AG04449 (cell line): ENCODE measurements at regions of chr2 and their contacts with region 1.

Region 1: GRCh38 chr2:31401580-31401979 is 13.0 kb downstream of the XDH start:
- DNase-seq: peak; percentile 94
- H3K4me3 ChIP-seq: no peak overlapping the region
- CTCF ChIP-seq: no peak

Region 2: DNA sequence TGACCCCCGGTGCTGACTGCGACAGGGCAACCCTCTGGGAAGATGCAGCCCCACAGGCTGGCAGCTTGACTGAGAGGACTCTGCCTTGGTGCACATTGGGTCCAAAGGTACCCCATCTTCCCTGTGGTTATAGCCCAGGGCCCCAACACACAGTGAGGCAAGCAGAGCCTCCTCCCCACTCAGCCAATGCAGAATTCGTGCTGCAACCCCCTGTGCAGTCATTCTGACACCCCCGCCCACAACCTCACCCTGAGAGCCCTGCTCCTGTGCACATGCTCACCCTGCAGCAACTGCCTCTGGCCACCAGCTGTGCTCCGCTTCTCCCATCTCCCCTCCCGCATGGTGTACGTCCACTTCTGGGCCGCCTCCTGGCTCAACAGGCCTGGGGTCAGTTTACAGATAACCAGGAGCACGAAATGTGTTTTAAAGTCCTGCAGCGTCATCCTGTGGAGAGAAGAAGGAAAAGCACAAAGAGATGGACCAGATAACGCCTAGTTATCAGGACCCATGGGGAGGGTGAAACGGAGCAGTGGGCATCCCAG is 208.7 kb before region 1 on chr2:
- CTCF ChIA-PET with region 1: no interaction called
- POLR2A ChIA-PET with region 1: no interaction called
- DNase-seq: no peak
- H3K4me3 ChIP-seq: no peak overlapping the region
- CTCF ChIP-seq: no peak

Region 3: DNA sequence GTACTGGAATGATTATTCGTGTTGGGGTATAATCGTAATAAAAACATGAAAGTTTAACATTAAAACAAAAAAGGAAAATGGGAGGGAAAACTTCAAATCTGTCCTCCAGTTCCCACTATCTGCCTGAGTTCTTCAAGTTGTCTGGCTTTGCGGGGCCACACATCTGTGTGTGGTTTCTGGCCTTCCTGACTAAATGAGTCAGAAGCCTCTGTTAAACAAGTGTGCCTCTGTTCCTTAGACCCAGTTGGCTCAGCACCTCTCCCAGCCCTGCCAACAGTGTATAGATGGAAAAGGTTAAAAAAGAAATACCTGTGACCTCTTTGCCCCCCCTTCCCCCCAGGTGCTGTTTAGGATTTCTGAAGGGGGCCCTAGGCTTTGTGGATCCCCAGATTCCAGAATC is 17.2 kb before region 1 on chr2:
- CTCF ChIA-PET with region 1: interaction called, 8 read pairs
- POLR2A ChIA-PET with region 1: interaction called, 12 read pairs
- DNase-seq: peak; percentile 76
- H3K4me3 ChIP-seq: no peak overlapping the region
- CTCF ChIP-seq: no peak

Region 4: GRCh38 chr2:31413862-31414550 is 12.4 kb after region 1 on chr2:
- CTCF ChIA-PET with region 1: interaction called, 14 read pairs
- POLR2A ChIA-PET with region 1: no interaction called
- DNase-seq: no peak
- H3K4me3 ChIP-seq: no peak overlapping the region
- CTCF ChIP-seq: no peak